Right ventricle myocardium superior (tissue), 1 donor: ENCODE measurements at regions of chr7 and their contacts with region 1.

Region 1: DNA sequence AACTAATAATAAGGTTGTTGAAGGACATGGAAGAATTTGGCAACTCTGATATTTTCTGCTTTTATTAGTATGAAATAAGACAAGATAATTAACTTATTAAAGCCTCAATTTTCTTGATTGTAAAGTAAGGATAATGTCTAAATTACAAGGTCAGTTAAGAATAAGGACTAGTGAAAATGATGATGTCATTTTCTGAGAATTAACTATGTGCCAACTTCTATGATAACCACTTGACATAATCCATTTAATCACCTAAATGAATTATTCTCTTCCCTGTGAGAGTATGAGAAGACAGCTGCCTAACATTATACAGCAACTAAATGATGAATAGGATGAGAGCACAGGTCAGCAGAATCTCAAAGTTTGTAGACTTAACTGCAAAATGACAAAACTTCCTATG is 1153.4 kb upstream of the POT1 start:
- DNase-seq: no peak
- ATAC-seq: no peak

Region 2: GRCh38 chr7:126140858-126141466 is 57.9 kb after region 1 on chr7:
- intact Hi-C with region 1: loop called (anchors 5 kb)
- DNase-seq: no peak
- ATAC-seq: no peak

Region 3: GRCh38 chr7:126254297-126254696 is 171.3 kb after region 1 on chr7:
- intact Hi-C with region 1: no loop called
- DNase-seq: no peak
- ATAC-seq: no peak